ENCODE measurements at regions of chr1 and their contacts with region 1.

Region 1: DNA sequence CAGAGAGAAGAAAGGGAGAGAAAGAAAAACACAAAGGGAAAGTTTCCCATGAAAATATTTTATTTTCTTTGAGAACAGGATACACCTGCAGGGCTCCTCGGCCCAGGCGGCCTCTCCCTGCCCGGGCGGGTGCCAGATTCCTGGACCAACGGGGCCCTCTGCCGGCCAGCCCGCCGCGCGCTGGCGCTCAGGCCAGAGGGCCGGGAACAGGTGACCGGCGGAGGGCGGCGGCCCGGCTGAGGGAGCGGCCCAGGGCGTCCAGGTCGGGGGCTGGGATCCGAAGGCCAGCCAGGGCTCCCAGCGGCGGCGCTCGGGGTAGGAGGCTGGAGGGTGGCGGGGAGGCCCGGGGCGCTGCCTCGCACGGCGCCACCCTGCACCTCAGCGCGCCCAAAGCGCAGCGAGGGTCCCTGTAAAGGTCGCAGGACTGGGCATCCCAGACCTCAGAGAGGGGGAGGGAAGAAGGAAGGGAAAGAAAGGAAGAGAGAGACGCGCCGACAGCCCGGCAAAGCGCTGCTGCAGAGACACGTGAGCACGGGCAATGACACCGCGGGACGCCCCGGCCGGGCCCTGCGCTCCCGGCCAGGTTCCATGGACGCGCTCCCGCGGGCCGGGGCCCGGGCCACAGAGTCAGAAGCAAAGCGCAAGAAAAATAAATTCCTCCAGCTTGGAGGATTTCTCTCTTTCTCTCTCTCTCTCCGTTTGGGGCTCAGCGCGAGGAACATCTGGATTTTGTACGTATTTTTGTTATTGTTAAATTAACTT is 927 bp downstream of the WNT9A start:
- DNase-seq: peak; percentile 77
- H3K4me3 ChIP-seq: peak overlapping the region; percentile 76
- H3K27ac ChIP-seq: peak overlapping the region; percentile 30; the same call in 1 of the 2 replicates
- H3K4me1 ChIP-seq: peaks cover 8% of the 10 kb centered on the region; the same call in 1 of the 2 replicates
- H3K27me3 ChIP-seq: no peaks in the 10 kb centered on the region

Region 2: DNA sequence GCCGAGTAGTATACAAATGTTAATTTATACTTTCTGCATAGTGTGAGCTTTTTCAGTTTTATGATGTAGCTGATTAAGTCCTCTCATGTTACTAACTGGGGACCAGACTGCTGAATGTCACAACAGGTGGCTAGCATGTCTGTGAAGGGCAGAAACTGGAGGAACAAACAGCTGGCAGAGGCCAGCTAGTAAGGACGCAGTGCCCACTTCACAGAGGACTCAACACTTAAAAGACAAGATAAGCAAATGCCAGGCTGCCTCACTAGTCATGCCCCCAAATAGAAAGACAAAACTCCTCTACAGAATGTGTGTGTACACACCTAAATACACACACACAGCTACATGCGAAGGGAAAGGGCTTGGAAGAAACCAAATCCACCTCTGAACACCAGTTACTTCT is 457.2 kb before region 1 on chr1:
- in situ Hi-C with region 1: loop called (anchors 25 kb)
- DNase-seq: no peak
- H3K4me3 ChIP-seq: no peak overlapping the region
- H3K27ac ChIP-seq: no peak overlapping the region
- H3K4me1 ChIP-seq: no peaks in the 10 kb centered on the region
- H3K27me3 ChIP-seq: 0 out of 2 replicates have a peak, but pooled peaks cover 4% of the 10 kb centered on the region

Region 3: DNA sequence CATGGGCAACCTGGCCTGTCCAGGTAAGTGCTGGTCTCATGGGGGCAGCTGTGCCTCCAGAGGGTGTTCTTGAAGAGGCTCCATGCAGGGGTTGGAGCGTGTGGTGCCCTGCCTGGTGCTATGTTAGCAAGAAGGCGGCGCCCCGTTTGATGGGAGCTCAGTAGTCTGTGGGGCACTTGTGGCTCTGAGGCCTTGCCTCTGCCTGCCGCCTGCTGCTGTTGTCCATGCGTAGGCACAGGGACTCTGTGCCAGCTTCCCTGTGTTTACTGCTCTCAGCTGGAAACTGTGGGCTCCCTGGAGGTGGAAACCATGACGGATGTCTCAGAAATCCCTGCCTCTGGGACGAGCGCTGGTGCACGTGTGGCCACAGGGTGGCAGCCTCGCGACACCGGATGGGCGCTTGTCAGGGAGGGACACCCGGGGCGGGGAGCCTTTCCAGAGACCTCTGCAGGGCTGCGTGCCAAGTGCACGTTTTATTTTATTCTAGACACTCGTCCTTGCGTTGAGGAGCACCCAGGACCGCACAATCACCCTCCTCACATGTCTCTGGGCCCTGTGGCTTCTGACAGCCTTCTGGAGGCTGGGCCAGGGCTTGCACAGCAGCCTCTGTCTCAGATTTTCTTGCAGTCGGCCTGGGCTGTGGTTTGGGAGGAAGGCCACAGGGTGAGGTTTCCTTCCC is 184.4 kb before region 1 on chr1:
- in situ Hi-C with region 1: loop called (anchors 10 kb)
- DNase-seq: peak; percentile 92
- H3K4me3 ChIP-seq: no peak overlapping the region
- H3K27ac ChIP-seq: no peak overlapping the region
- H3K4me1 ChIP-seq: peaks cover 37% of the 10 kb centered on the region
- H3K27me3 ChIP-seq: no peaks in the 10 kb centered on the region

Region 4: GRCh38 chr1:228082135-228082891 is 135.5 kb after region 1 on chr1 and contains the start of gene ARF1:
- in situ Hi-C with region 1: no loop called
- DNase-seq: peak; percentile 98
- H3K4me3 ChIP-seq: peak within 1 kb of the TSS; percentile 92
- H3K27ac ChIP-seq: peak within 1 kb of the TSS; percentile 93
- H3K4me1 ChIP-seq: peaks cover 34% of the 10 kb centered on the region
- H3K27me3 ChIP-seq: no peaks in the 10 kb centered on the region
- total RNA-seq, gene ARF1: 259 and 292 TPM in 2 replicates

Measured in GM23248 (cell line).